Activated CD8-positive, alpha-beta T cell treated with anti-CD3 and anti-CD28 coated beads for 36 hours (primary cell): ENCODE measurements at regions of chr5 and their contacts with region 1.

Region 1: GRCh38 chr5:88690409-88691229 is 192.4 kb downstream of the MEF2C start:
- DNase-seq: peak; percentile 79
- ATAC-seq: peak; percentile 89
- H3K4me3 Mint-ChIP-seq: peak overlapping the region; percentile 48
- H3K27ac Mint-ChIP-seq: no peak overlapping the region
- H3K4me1 Mint-ChIP-seq: peaks cover 16% of the 10 kb centered on the region
- H3K27me3 Mint-ChIP-seq: peaks cover 86% of the 10 kb centered on the region
- CTCF ChIP-seq: peak; percentile 98

Region 2: GRCh38 chr5:87780831-87781760 is 909.5 kb before region 1 on chr5:
- CTCF ChIA-PET with region 1: interaction called, 89 read pairs
- POLR2A ChIA-PET with region 1: no interaction called
- intact Hi-C with region 1: loop called (anchors 1 kb)
- DNase-seq: peak; percentile 81
- ATAC-seq: peak; percentile 95
- H3K4me3 Mint-ChIP-seq: no peak overlapping the region
- H3K27ac Mint-ChIP-seq: no peak overlapping the region
- H3K4me1 Mint-ChIP-seq: peaks cover 2% of the 10 kb centered on the region
- H3K27me3 Mint-ChIP-seq: peaks cover 7% of the 10 kb centered on the region
- CTCF ChIP-seq: peak; percentile 89

Region 3: GRCh38 chr5:88660947-88661805 is 29.4 kb before region 1 on chr5:
- CTCF ChIA-PET with region 1: interaction called, 33 read pairs
- POLR2A ChIA-PET with region 1: no interaction called
- intact Hi-C with region 1: loop called (anchors 5 kb)
- DNase-seq: peak; percentile 72
- ATAC-seq: peak; percentile 69
- H3K4me3 Mint-ChIP-seq: peak overlapping the region; percentile 54
- H3K27ac Mint-ChIP-seq: no peak overlapping the region
- H3K4me1 Mint-ChIP-seq: peaks cover 17% of the 10 kb centered on the region
- H3K27me3 Mint-ChIP-seq: peaks cover 63% of the 10 kb centered on the region
- CTCF ChIP-seq: no peak

Region 4: GRCh38 chr5:88666761-88667495 is 23.7 kb before region 1 on chr5:
- CTCF ChIA-PET with region 1: interaction called, 11 read pairs
- POLR2A ChIA-PET with region 1: no interaction called
- intact Hi-C with region 1: no loop called
- DNase-seq: no peak
- ATAC-seq: peak; percentile 37
- H3K4me3 Mint-ChIP-seq: peak overlapping the region; percentile 64
- H3K27ac Mint-ChIP-seq: no peak overlapping the region
- H3K4me1 Mint-ChIP-seq: peaks cover 24% of the 10 kb centered on the region
- H3K27me3 Mint-ChIP-seq: peaks cover 76% of the 10 kb centered on the region
- CTCF ChIP-seq: no peak

Region 5: GRCh38 chr5:88680253-88681132 is 10.1 kb before region 1 on chr5:
- CTCF ChIA-PET with region 1: interaction called, 88 read pairs
- POLR2A ChIA-PET with region 1: interaction called, 5 read pairs
- intact Hi-C with region 1: no loop called
- DNase-seq: peak; percentile 77
- ATAC-seq: peak; percentile 77
- H3K4me3 Mint-ChIP-seq: peak overlapping the region; percentile 24
- H3K27ac Mint-ChIP-seq: no peak overlapping the region
- H3K4me1 Mint-ChIP-seq: peaks cover 11% of the 10 kb centered on the region
- H3K27me3 Mint-ChIP-seq: peaks cover 75% of the 10 kb centered on the region
- CTCF ChIP-seq: peak; percentile 96

Region 6: DNA sequence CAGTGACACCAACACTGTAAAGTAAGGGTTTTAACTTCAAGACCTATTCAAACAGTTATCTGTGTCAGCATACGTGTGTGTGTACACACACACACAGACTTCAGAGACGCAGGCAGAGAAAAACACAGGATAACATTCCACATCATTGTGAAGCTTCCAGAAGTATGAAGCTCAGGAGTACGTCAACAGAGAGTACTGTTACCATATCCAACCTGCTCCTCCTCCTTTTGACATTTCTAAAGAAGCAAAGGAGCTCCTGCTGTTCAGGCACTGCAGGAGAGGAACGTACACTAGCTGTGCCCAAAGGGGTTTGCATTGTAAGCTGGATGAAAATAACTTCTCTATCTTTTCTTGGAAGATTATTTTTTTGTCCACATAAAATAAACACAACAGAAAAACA is 11.7 kb after region 1 on chr5:
- CTCF ChIA-PET with region 1: interaction called, 12 read pairs
- POLR2A ChIA-PET with region 1: no interaction called
- intact Hi-C with region 1: no loop called
- DNase-seq: no peak
- ATAC-seq: no peak
- H3K4me3 Mint-ChIP-seq: no peak overlapping the region
- H3K27ac Mint-ChIP-seq: no peak overlapping the region
- H3K4me1 Mint-ChIP-seq: no peaks in the 10 kb centered on the region
- H3K27me3 Mint-ChIP-seq: peaks cover 27% of the 10 kb centered on the region
- CTCF ChIP-seq: no peak

Region 7: DNA sequence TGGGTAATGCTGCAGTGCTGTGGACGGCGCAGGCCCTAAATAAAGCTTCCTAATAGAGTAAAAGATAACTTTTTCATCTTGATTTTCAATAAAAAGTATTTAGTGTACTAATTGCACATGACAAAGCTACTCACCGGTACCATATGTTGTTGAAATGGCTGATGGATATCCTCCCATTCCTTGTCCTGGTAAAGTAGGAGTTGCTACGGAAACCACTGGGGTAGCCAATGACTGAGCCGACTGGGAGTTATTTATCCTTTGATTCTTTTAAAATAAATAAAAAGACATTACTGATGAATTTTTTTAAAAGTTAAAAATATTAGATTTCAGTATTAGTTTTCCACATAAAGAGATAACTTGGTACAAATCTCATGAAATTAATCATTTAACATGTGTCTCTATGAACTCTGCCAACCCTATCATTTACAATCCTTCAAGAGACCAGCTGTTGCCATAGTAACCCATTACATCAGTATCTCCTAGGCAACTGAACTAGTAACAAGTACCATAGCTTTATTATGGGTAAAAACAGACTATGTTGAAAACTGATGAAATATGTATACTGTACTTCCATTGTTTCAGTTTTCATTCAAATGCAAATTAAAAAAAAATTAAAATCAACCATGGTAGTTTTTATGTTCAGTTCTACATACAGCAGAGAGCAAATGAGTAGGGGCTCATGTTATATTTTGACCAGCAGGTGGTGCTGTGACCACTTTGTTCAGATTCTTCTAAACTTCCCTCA is 38.6 kb after region 1 on chr5:
- CTCF ChIA-PET with region 1: interaction called, 13 read pairs
- POLR2A ChIA-PET with region 1: no interaction called
- intact Hi-C with region 1: no loop called
- DNase-seq: peak; percentile 76
- ATAC-seq: peak; percentile 71
- H3K4me3 Mint-ChIP-seq: no peak overlapping the region
- H3K27ac Mint-ChIP-seq: no peak overlapping the region
- H3K4me1 Mint-ChIP-seq: peaks cover 5% of the 10 kb centered on the region
- H3K27me3 Mint-ChIP-seq: peaks cover 10% of the 10 kb centered on the region
- CTCF ChIP-seq: peak; percentile 80

Region 8: GRCh38 chr5:89043676-89044075 is 353.1 kb after region 1 on chr5:
- CTCF ChIA-PET with region 1: no interaction called
- POLR2A ChIA-PET with region 1: no interaction called
- intact Hi-C with region 1: no loop called
- DNase-seq: no peak
- ATAC-seq: peak; percentile 34
- H3K4me3 Mint-ChIP-seq: no peak overlapping the region
- H3K27ac Mint-ChIP-seq: no peak overlapping the region
- H3K4me1 Mint-ChIP-seq: no peaks in the 10 kb centered on the region
- H3K27me3 Mint-ChIP-seq: no peaks in the 10 kb centered on the region
- CTCF ChIP-seq: no peak

Region 9: GRCh38 chr5:89277816-89278215 is 587.2 kb after region 1 on chr5:
- CTCF ChIA-PET with region 1: no interaction called
- POLR2A ChIA-PET with region 1: no interaction called
- intact Hi-C with region 1: no loop called
- DNase-seq: no peak
- ATAC-seq: no peak
- H3K4me3 Mint-ChIP-seq: no peak overlapping the region
- H3K27ac Mint-ChIP-seq: no peak overlapping the region
- H3K4me1 Mint-ChIP-seq: peaks cover 3% of the 10 kb centered on the region
- H3K27me3 Mint-ChIP-seq: peaks cover 2% of the 10 kb centered on the region
- CTCF ChIP-seq: no peak